IMR-90 (cell line): ENCODE measurements at regions of chr17 and their contacts with region 1.

Region 1: DNA sequence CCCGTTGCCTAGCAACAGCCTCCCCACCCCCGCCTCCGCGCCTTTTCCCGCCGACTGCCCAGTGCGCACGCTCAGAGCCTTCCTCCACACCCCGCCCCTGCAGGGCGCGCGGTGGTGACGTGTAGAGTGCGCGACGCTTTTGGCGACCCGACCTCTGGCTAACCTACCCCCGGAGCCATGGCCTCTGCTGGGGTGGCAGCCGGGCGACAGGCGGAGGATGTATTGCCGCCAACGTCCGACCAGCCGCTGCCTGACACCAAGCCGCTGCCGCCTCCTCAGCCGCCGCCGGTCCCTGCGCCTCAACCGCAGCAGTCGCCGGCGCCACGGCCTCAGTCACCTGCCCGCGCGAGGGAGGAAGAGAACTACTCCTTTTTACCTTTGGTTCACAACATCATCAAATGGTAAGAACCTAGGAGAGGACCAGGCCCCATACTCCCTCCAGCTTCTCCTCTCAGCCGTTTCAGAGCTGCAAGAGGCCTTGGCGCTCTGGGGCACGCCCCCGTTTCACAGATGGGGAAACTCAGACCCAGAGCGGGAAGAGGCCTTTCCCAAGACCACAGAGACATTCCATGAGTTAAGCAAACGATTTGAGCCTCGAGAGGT is at the start of gene MED9:
- DNase-seq: peak; percentile 85
- ATAC-seq: peak; percentile 99
- H3K4me3 ChIP-seq: peak within 1 kb of the TSS; percentile 99
- H3K27ac ChIP-seq: peak within 1 kb of the TSS; percentile 90
- H3K4me1 ChIP-seq: no peaks in the 10 kb centered on the region; the same call in 1 of the 2 replicates
- H3K27me3 ChIP-seq: peaks cover 20% of the 10 kb centered on the region
- CTCF ChIP-seq: no peak
- POLR2A ChIP-seq: peak; percentile 49; the same call in 1 of the 2 replicates
- RAD21 ChIP-seq: no peak
- total RNA-seq, gene MED9: 6.1 and 8.9 TPM in 2 replicates

Region 2: GRCh38 chr17:17376362-17376761 is 100.6 kb before region 1 on chr17:
- CTCF ChIA-PET with region 1: no interaction called
- POLR2A ChIA-PET with region 1: no interaction called
- dilution Hi-C with region 1: no loop called
- in situ Hi-C with region 1: no loop called
- intact Hi-C with region 1: loop called (anchors 5 kb)
- DNase-seq: peak; percentile 76
- ATAC-seq: peak; percentile 93
- H3K4me3 ChIP-seq: no peak overlapping the region
- H3K27ac ChIP-seq: peak overlapping the region; percentile 68; the same call in 1 of the 2 replicates
- H3K4me1 ChIP-seq: peaks cover 6% of the 10 kb centered on the region
- H3K27me3 ChIP-seq: peaks cover 22% of the 10 kb centered on the region
- CTCF ChIP-seq: no peak
- POLR2A ChIP-seq: no peak
- RAD21 ChIP-seq: no peak

Region 3: DNA sequence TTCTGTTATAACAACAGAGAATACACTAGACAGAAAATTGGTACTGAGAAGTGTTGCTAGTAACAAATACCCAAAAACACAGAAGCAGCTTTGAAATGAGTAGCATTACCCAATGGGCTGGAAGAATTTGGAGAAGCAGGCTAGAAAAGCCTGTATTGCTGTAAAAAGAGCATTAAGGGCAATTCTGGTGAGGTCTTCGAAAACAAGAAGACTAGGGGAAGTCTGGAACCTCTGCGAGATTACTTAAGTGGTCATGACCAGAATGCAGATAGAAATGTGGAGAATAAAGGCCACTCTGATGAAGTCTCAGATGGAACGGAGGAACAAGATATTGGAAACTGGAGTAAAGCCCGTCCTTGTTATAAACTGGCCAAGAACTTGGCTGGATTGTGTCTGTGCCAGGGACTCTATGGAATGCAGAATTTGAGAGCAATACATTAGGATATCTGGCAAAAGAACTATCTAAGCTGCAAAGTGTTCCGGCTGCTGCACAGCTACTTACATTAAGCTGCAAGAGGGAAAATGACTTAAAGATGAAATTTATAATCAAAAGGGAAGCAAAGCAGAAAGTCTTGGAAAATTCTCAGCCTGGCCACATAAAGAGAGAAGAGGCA is 159.4 kb after region 1 on chr17:
- CTCF ChIA-PET with region 1: no interaction called
- POLR2A ChIA-PET with region 1: no interaction called
- dilution Hi-C with region 1: no loop called
- in situ Hi-C with region 1: no loop called
- intact Hi-C with region 1: no loop called
- DNase-seq: no peak
- ATAC-seq: peak; percentile 29; the same call in 1 of the 2 replicates
- H3K4me3 ChIP-seq: no peak overlapping the region
- H3K27ac ChIP-seq: no peak overlapping the region
- H3K4me1 ChIP-seq: no peaks in the 10 kb centered on the region
- H3K27me3 ChIP-seq: peaks cover 18% of the 10 kb centered on the region
- CTCF ChIP-seq: no peak
- POLR2A ChIP-seq: no peak
- RAD21 ChIP-seq: no peak

Region 4: GRCh38 chr17:19377602-19378392 is 1900.8 kb after region 1 on chr17:
- CTCF ChIA-PET with region 1: no interaction called
- POLR2A ChIA-PET with region 1: no interaction called
- dilution Hi-C with region 1: no loop called
- in situ Hi-C with region 1: no loop called
- intact Hi-C with region 1: no loop called
- DNase-seq: peak; percentile 99
- ATAC-seq: peak; percentile 95
- H3K4me3 ChIP-seq: peak overlapping the region; percentile 66
- H3K27ac ChIP-seq: peak overlapping the region; percentile 90
- H3K4me1 ChIP-seq: peaks cover 12% of the 10 kb centered on the region; the same call in 1 of the 2 replicates
- H3K27me3 ChIP-seq: no peaks in the 10 kb centered on the region
- CTCF ChIP-seq: no peak
- POLR2A ChIP-seq: peak; percentile 91
- RAD21 ChIP-seq: no peak